Activated CD4-positive, alpha-beta T cell treated with anti-CD3 and anti-CD28 coated beads, Interleukin-2, amount 10 ng/mL, durations not matched to agents 24 days and 14 days (primary cell): ENCODE measurements at regions of chr20 and their contacts with region 1.

Region 1: GRCh38 chr20:43749734-43750294 is 23.0 kb upstream of the GTSF1L start:
- DNase-seq: peak; percentile 95
- H3K4me3 Mint-ChIP-seq: peak overlapping the region; percentile 38
- H3K27ac Mint-ChIP-seq: peak overlapping the region; percentile 88
- H3K4me1 Mint-ChIP-seq: peaks cover 52% of the 10 kb centered on the region
- H3K27me3 Mint-ChIP-seq: no peaks in the 10 kb centered on the region

Region 2: GRCh38 chr20:43721429-43722152 is 28.2 kb before region 1 on chr20:
- intact Hi-C with region 1: loop called (anchors 2 kb)
- DNase-seq: no peak
- H3K4me3 Mint-ChIP-seq: peak overlapping the region; percentile 66
- H3K27ac Mint-ChIP-seq: peak overlapping the region; percentile 79
- H3K4me1 Mint-ChIP-seq: peaks cover 16% of the 10 kb centered on the region
- H3K27me3 Mint-ChIP-seq: no peaks in the 10 kb centered on the region

Region 3: DNA sequence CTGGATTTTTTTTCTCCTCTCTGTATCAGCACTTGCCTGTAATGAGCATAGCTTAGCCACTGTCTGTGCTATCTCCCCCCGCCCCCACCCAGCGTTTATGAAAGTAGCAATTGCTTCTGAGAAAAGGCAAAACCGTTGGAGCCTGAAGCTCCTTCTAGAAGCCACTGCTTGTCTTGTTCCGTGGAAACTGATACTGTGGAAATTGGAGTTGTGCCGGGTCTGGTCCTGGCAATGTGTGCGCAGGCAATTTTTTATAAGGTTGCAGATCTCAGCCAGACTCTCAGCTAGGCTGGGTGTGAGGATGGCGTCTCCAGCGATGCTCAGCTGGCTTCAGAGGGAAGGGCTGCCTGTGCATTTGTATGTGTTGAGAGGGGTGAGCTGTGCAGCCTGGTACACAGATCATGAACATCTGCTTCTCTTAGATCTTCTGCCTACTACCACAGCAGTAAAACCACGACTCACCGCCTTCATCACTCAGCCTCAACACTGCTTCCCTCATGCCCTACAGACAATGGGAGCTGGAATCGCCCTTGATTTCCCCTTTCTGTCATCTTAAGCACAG is 49.4 kb after region 1 on chr20:
- intact Hi-C with region 1: loop called (anchors 2 kb)
- DNase-seq: peak; percentile 60
- H3K4me3 Mint-ChIP-seq: peak overlapping the region; percentile 40
- H3K27ac Mint-ChIP-seq: peak overlapping the region; percentile 65
- H3K4me1 Mint-ChIP-seq: peaks cover 23% of the 10 kb centered on the region
- H3K27me3 Mint-ChIP-seq: no peaks in the 10 kb centered on the region

Region 4: DNA sequence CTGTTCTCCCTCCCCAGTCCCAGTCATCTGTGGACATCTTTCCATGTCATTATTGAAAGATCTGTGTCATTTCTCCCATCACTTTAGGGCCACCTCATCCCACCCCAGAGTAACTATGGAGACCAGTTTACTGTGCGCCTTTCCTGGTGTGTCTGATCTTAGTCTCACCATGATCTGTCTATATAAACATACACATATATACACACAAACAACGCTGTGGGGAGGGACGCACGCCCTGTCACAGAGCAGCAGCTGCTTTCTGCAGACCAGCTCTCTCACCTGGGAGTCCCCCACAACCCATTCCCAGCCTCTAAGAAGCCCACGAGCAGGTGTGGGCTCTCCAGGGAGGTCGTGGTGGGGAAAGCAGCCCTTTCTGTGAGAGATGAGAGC is 96.7 kb after region 1 on chr20:
- intact Hi-C with region 1: loop called (anchors 1 kb)
- DNase-seq: no peak
- H3K4me3 Mint-ChIP-seq: no peak overlapping the region
- H3K27ac Mint-ChIP-seq: peak overlapping the region; percentile 72
- H3K4me1 Mint-ChIP-seq: peaks cover 34% of the 10 kb centered on the region
- H3K27me3 Mint-ChIP-seq: peaks cover 1% of the 10 kb centered on the region

Region 5: GRCh38 chr20:44018259-44018941 is 268.6 kb after region 1 on chr20:
- intact Hi-C with region 1: loop called (anchors 5 kb)
- DNase-seq: no peak
- H3K4me3 Mint-ChIP-seq: no peak overlapping the region
- H3K27ac Mint-ChIP-seq: no peak overlapping the region
- H3K4me1 Mint-ChIP-seq: peaks cover 23% of the 10 kb centered on the region
- H3K27me3 Mint-ChIP-seq: peaks cover 38% of the 10 kb centered on the region

Region 6: GRCh38 chr20:44028868-44029847 is 279.3 kb after region 1 on chr20:
- intact Hi-C with region 1: no loop called
- DNase-seq: peak; percentile 76
- H3K4me3 Mint-ChIP-seq: peak overlapping the region; percentile 69
- H3K27ac Mint-ChIP-seq: peak overlapping the region; percentile 85
- H3K4me1 Mint-ChIP-seq: peaks cover 46% of the 10 kb centered on the region
- H3K27me3 Mint-ChIP-seq: peaks cover 38% of the 10 kb centered on the region

Region 7: DNA sequence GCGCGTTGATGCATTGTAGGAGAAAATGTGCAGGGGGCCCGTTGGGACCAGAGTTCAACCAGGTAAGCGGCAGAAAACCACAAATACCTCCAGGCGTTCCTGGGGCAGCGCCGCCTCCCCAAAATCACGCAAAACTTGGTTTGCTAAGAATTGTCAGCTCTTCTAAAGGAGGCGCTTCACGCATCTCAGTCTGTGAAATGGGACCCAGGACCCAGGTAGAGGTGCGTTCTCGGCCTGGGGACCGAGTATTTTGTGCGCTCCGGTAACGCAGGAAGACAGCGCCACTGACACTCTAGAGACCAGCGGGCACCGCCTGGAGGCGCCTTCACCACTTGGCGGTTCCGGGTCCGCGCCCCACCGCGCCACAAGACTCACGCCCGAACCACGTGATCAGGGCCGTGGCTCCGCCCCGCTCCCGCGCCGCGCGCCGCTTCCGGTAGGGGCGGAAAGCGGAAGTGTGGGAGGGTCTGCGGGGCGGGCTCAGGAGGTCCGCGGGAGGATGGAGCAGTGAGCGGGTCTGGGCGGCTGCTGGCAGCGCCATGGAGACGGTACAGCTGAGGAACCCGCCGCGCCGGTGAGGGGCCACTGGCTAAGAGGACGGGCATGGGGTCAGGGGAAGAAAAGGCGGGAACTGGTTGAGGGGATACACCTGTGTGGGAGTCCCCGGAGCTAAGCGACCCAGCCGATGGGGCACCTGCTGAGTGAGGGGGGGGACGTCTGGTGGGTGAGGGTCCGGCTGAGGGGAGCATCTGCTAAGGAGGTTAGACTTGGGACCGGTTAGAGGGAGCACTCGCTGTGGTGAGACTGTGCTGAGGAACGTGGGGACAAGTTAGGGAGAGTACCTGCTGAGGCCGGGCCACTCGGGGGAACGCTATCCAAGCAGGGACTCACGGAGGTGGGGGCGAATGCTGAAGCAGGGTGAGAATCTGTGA is 1216.5 kb after region 1 on chr20 and contains the start of gene STK4:
- intact Hi-C with region 1: loop called (anchors 5 kb)
- DNase-seq: peak; percentile 99
- H3K4me3 Mint-ChIP-seq: peak within 1 kb of the TSS; percentile 91
- H3K27ac Mint-ChIP-seq: peak within 1 kb of the TSS; percentile 98
- H3K4me1 Mint-ChIP-seq: peaks cover 65% of the 10 kb centered on the region
- H3K27me3 Mint-ChIP-seq: no peaks in the 10 kb centered on the region
- total RNA-seq, gene STK4: 141 and 143 TPM in 2 replicates